ENCODE measurements at regions of chr11 and their contacts with region 1.

Region 1: DNA sequence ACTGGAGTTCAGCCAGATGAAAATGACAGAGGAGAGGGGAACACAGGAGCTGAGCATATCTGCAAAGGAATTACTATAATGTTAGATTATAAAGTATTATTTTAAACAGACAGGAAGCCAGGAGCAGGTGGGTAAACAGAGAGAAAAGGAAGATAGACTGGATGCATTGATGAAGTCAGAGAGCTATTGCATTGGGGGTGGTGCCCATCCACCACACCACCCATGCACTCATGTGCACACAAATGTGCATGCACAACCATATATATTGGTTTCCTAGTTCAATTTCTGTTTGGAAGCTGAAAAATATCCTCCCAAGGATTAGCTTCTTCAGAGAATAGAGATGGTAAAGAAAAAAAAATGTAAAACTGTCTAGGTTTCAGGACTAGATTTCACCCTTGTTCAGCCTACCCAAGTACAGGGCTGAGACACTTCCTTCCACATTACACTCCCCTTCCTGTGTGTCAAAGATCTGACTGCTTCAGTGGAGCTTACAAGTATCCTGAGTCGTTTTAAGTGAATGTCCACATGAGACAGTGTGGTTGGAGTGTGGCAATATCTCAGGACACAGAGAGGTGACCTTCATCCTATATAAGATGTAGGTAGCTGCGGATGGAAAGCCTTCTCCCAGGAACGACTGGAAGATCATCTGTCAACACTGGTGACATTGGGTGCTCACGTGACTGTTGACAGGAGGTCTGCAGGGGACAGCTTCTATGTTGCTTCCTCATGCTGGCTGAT is 12.2 kb upstream of the SMPD1 start:
- DNase-seq: no peak
- H3K4me3 ChIP-seq: no peak overlapping the region
- CTCF ChIP-seq: no peak
- POLR2A ChIP-seq: no peak

Region 2: DNA sequence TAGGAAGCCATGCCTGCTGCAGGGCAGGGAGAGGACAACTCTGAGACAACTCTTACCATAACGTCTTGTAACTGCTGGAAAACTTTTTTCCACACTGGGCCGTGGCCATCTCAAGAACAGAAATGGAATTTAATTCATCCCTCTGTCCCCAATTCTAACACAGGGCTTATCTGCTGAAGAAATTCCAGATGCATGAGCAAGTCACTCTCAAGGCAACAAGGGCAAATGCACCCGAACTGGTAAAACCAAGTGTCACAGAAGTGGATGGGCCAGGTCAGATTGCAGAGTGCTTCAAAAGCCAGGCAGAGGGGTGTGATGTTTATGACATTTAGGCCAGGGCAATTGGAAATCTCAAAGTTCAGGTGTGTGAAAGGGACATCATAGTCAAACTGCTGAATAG is 19.6 kb after region 1 on chr11:
- intact Hi-C with region 1: no loop called
- DNase-seq: no peak
- H3K4me3 ChIP-seq: no peak overlapping the region
- CTCF ChIP-seq: no peak
- POLR2A ChIP-seq: no peak

Region 3: DNA sequence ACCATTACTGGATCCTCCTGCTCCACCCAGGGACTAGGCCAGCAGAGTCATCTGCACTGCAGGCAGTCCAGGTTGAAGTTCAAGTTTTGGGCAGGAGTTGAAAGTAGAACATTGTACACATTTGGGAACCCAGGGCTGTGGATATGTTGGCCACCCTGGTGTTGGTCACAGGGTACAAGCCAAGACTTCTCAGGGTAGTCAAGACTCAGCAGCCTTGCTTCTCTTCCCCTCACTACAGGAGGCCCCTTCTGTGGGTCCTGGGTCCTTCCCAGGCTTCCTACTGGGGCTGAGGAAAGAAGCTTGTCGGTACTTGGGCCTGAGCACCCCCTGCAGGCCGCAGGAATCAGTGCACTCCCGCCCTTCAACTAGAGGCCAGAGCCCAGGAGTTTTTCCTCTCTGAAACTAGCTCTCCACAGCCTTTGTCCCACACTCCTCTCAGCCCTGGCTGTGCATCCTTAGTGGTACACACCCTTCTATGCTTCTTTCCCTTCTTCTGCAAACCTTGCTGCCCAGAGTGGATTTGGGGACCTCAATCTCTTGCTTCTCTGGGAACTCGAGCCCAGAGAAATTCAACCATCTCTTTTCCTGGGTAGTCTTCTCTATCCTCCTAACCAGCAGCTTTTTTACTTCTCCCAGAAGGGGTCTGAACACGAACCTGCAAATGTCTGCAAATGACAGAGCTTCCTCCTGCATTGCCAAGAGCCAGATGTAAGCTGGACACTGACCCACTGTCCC is 65.4 kb after region 1 on chr11:
- intact Hi-C with region 1: loop called (anchors 5 kb)
- DNase-seq: peak; percentile 38 to 88
- H3K4me3 ChIP-seq: no peak overlapping the region
- CTCF ChIP-seq: peak in 1 of 3 donors; percentile 55
- POLR2A ChIP-seq: no peak

Region 4: GRCh38 chr11:6663794-6664469 is 285.9 kb after region 1 on chr11:
- intact Hi-C with region 1: no loop called
- DNase-seq: no peak
- H3K4me3 ChIP-seq: no peak overlapping the region
- CTCF ChIP-seq: no peak
- POLR2A ChIP-seq: no peak